ENCODE measurements at regions of chr11 and their contacts with region 1.

Region 1: DNA sequence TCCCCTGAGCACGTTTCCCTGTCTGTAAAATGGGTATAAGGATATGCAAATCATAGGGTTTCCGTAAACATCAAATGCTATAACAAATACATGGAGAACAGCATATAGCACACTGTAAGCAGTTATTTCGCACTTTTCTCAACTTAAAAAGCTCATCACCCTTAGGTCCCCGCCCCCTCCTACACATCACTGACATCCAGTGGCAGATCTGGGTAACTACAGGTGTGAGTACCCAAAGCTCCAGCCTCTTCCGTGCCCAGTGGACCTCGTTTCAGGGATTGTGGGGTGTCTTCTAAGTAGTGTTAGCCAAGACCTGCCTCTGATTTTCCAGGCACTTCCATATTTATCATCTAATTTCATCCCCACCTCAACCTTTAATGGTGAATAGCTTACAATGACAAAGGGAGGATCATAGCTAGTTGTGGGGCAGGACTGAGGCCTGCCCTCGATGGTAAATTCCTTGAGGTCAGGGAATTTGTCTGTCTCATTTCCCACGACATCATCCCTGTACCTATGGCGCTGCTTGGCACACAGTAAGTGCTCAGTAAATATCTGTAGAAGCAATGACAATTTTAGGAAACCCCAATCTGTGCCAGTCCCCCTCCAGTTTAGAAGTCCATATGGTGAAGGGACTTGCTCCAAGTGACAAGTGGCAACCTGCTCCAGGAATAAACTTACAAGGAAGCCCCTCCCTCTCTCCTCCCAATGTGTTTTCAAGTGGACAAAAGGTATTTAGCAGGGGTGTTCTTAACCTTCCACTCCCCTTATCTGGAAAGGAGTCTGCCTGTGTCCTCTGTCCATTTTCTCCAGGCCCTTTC is 340.5 kb downstream of the TENM4 start:
- DNase-seq: peak; percentile 12
- ATAC-seq: peak; percentile 92
- H3K4me3 ChIP-seq: no peak overlapping the region
- H3K27ac ChIP-seq: no peak overlapping the region
- H3K4me1 ChIP-seq: no peaks in the 10 kb centered on the region
- H3K27me3 ChIP-seq: peaks cover 16% of the 10 kb centered on the region
- CTCF ChIP-seq: peak; percentile 33 to 74 (median 71); a peak in 5 of 6 replicates
- POLR2A ChIP-seq: no peak
- RAD21 ChIP-seq: peak; percentile 66

Region 2: DNA sequence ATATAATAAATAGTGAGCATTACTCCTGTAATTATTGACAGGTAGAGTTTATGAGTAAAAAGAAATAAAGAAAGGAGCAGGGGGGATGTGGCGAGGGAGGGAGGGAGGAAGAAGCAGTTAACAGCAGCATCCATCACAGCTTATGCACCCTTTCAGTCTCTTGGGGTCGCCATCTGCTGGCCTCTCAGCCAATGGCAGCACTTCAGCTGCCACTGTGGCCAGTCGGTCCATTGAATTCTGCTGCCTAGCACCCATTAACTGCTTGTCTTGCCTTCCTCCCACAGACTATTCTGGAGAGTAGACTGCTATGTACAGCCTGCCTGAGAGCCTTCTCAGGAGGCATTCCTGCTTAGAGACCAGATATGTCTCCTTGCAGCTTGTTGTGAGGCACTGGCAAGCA is 47.8 kb before region 1 on chr11:
- CTCF ChIA-PET with region 1: no interaction called
- POLR2A ChIA-PET with region 1: no interaction called
- RAD21 ChIA-PET with region 1: no interaction called
- intact Hi-C with region 1: no loop called
- DNase-seq: no peak
- ATAC-seq: peak; percentile 75
- H3K4me3 ChIP-seq: no peak overlapping the region
- H3K27ac ChIP-seq: no peak overlapping the region
- H3K4me1 ChIP-seq: peaks cover 3 to 9% of the 10 kb centered on the region in 2 experiments; a peak in 3 of 4 replicates
- H3K27me3 ChIP-seq: peaks cover 21% of the 10 kb centered on the region; the same call in 1 of the 2 replicates
- CTCF ChIP-seq: 0 out of 6 replicates have a peak, but pooled peaks of 2 of the 3 experiments have one; percentile 15 to 18
- POLR2A ChIP-seq: no peak
- RAD21 ChIP-seq: no peak

Region 3: GRCh38 chr11:79087238-79087960 is 12.9 kb before region 1 on chr11:
- CTCF ChIA-PET with region 1: interaction called, 12 read pairs
- POLR2A ChIA-PET with region 1: no interaction called
- RAD21 ChIA-PET with region 1: no interaction called
- intact Hi-C with region 1: no loop called
- DNase-seq: no peak
- ATAC-seq: peak; percentile 47
- H3K4me3 ChIP-seq: no peak overlapping the region
- H3K27ac ChIP-seq: no peak overlapping the region
- H3K4me1 ChIP-seq: peaks cover 9 to 21% of the 10 kb centered on the region in 2 experiments
- H3K27me3 ChIP-seq: no peaks in the 10 kb centered on the region
- CTCF ChIP-seq: no peak
- POLR2A ChIP-seq: no peak
- RAD21 ChIP-seq: no peak

Region 4: DNA sequence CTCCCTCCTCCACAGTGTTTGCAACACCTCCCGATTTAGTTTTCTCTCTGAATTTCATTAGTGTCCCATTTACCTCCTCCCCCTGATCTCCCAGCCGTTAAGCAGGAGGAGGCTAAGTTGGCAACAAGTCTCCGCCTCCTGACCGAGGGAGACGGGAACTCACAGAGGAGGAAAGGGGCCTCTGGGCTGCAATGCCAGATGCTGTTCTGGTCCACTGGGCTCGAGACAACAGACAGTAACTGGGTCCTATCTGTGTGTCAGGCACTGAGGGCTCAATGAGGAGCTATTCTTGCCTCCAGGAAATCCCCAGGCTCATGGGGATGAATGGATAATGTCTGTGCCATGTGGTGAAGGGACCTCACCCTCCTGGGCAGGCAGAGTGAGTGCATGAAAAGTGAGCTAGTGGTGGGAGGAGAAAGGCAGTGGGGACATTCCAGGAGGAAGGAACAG is 112.5 kb after region 1 on chr11:
- CTCF ChIA-PET with region 1: no interaction called
- POLR2A ChIA-PET with region 1: no interaction called
- RAD21 ChIA-PET with region 1: no interaction called
- intact Hi-C with region 1: no loop called
- DNase-seq: no peak
- ATAC-seq: no peak
- H3K4me3 ChIP-seq: no peak overlapping the region
- H3K27ac ChIP-seq: no peak overlapping the region
- H3K4me1 ChIP-seq: no peaks in the 10 kb centered on the region
- H3K27me3 ChIP-seq: peaks cover 52% of the 10 kb centered on the region
- CTCF ChIP-seq: no peak
- POLR2A ChIP-seq: no peak
- RAD21 ChIP-seq: no peak